ENCODE measurements at regions of chr1 and their contacts with region 1.

Region 1: GRCh38 chr1:50774759-50775351 is 185.2 kb downstream of the FAF1 start:
- DNase-seq: no peak
- ATAC-seq: peak in 1 of 2 donors; percentile 42

Region 2: GRCh38 chr1:50620680-50621329 is 154.1 kb before region 1 on chr1:
- intact Hi-C with region 1: no loop called
- DNase-seq: no peak
- ATAC-seq: peak in 1 of 2 donors; percentile 45

Region 3: GRCh38 chr1:51044834-51045233 is 270.0 kb after region 1 on chr1:
- intact Hi-C with region 1: loop called in 1 of 2 experiments (anchors 2 kb)
- DNase-seq: no peak
- ATAC-seq: no peak

Region 4: GRCh38 chr1:51192213-51192843 is 417.5 kb after region 1 on chr1:
- intact Hi-C with region 1: loop called in 1 of 2 experiments (anchors 5 kb)
- DNase-seq: peak; percentile 68
- ATAC-seq: peak; percentile 69 to 71

Region 5: DNA sequence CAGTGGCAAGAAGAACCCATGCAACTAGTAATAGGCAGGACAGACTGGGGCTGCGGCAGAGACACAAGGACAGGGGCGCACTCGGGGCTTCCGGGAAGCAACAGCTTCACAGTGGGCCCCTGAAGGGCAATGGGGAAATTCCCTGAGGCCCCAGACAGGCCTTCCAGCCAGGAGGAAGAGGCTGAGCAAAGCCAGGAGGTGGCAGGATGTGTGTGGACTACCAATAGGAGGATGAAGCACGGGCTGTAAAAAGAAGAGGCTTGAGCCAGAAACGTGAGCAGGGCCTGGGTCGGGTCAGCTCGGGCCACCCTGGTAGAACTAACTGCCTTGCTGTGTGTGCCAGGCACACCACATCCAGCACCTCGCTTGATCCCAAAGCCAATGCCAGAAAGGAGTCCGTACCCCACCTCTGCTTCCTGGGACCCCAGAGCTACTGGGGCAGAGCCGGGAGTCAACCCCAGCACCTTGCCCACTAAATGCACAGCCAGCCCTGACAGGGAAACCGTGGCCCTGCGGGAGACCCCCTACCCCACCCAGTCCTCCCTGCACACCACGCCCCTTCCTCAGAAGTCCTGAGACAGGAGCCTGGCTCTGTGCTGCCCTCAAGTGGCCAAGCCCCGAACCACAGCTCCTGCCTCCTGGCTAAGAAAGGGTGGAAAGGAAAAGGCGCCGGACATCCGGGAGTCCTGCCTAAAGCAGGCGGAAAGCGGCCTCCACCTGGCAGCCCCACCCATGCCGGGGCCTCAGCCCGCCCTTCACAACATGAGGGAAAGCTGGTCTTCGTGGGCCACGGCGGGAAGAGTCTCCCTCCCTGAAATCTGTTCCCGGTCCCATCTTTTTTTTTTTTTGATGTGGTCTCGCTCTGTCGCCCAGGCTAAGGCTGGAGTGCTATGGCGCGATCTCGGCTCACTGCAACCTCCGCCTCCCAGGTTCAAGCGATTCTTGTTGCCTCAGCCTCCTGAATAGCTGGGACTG is 521.8 kb after region 1 on chr1:
- intact Hi-C with region 1: no loop called
- DNase-seq: peak; percentile 85
- ATAC-seq: peak; percentile 80 to 86

Measured in left cardiac atrium (tissue), 4 donors.